ENCODE measurements at regions of chr17 and their contacts with region 1.

Region 1: DNA sequence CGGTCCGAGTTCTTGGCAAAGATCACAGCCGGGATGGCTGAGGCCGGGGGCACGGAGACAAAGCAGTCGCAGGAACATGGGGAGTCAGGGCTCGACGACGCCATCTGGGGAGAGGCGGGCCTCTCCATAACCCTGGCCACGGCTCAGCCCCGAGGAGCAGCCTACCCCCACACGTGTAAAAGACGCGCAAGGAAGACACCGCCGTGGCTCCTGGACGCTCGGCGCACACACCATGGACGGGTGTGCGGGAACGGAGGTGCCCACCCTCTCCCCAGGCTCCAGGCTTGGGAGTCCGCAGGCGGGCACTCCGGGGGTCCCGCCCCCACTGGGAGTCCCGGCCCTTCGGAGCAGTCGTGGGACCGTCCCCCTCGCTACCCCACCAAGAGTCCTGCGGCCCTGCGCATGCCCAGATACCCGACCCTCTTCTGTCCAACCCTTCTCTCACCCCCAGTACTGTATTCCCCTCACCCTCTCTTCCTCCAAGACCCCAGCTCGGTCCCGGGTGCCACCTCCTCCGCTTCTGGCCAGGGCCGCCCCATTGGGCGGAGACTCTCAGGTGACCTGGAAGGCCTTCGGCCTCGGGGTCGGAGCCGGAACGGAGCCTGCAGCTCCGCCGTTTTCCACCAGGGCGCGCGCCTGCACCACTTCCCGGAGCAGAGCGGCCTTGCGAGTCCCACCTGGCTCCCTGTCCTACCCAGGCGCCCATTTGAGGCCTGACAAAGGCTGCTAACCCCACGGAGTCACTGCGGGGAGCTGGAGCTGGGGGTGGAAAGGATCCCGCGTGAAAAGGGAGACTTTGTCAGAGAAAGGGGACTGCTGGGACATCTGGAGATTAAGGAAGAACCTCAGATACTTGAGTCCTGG is at the start of gene SCRN2:
- DNase-seq: peak; percentile 94 to 98 (median 97)
- ATAC-seq: peak; percentile 95
- H3K4me3 ChIP-seq: peak within 1 kb of the TSS; percentile 70
- H3K4me1 ChIP-seq: peaks cover 27% of the 10 kb centered on the region
- CTCF ChIP-seq: peak; percentile 97
- total RNA-seq, gene SCRN2: 38.4 to 45.1 (median 38.5) TPM

Region 2: GRCh38 chr17:47882247-47882646 is 41.3 kb after region 1 on chr17:
- intact Hi-C with region 1: loop called in 1 of 2 experiments (anchors 5 kb)
- DNase-seq: peak in 2 of 3 donors; percentile 69 to 73
- ATAC-seq: peak; percentile 57
- H3K4me3 ChIP-seq: no peak overlapping the region
- H3K4me1 ChIP-seq: peaks cover 39% of the 10 kb centered on the region
- CTCF ChIP-seq: no peak

Region 3: GRCh38 chr17:47889734-47890529 is 49.0 kb after region 1 on chr17:
- intact Hi-C with region 1: loop called (anchors 2 to 5 kb)
- DNase-seq: peak; percentile 88 to 97 (median 94)
- ATAC-seq: peak; percentile 83
- H3K4me3 ChIP-seq: no peak overlapping the region
- H3K4me1 ChIP-seq: peaks cover 15% of the 10 kb centered on the region
- CTCF ChIP-seq: peak; percentile 91

Region 4: DNA sequence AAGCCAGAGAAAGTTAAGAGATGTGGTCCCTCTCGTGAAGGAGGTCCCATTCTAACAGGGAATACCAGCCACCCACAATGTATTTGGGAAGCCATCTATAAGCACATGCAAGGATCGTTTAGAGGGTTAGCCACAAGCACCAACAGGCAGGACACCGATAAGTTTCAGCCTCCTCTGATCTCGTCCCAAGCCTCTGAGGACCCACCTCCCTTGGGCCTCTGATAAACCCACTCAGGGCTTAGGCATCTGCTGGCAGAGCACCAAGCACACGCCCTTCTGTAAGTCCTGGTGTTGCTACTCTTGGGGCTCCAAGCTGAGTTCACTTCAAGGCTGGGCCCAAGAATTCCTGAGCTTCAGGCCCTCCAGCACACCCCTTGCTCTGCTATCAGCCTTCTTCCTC is 95.0 kb after region 1 on chr17:
- intact Hi-C with region 1: no loop called
- DNase-seq: no peak
- ATAC-seq: no peak
- H3K4me3 ChIP-seq: no peak overlapping the region
- H3K4me1 ChIP-seq: peaks cover 3% of the 10 kb centered on the region
- CTCF ChIP-seq: no peak

Region 5: GRCh38 chr17:47967607-47968243 is 126.8 kb after region 1 on chr17:
- intact Hi-C with region 1: loop called in 1 of 2 experiments (anchors 10 kb)
- DNase-seq: peak in 2 of 3 donors; percentile 38 to 61
- ATAC-seq: peak; percentile 2
- H3K4me3 ChIP-seq: no peak overlapping the region
- H3K4me1 ChIP-seq: peaks cover 56% of the 10 kb centered on the region
- CTCF ChIP-seq: no peak

Measured in mucosa of descending colon (tissue), 3 donors.